ENCODE measurements at regions of chr15 and their contacts with region 1.

Region 1: DNA sequence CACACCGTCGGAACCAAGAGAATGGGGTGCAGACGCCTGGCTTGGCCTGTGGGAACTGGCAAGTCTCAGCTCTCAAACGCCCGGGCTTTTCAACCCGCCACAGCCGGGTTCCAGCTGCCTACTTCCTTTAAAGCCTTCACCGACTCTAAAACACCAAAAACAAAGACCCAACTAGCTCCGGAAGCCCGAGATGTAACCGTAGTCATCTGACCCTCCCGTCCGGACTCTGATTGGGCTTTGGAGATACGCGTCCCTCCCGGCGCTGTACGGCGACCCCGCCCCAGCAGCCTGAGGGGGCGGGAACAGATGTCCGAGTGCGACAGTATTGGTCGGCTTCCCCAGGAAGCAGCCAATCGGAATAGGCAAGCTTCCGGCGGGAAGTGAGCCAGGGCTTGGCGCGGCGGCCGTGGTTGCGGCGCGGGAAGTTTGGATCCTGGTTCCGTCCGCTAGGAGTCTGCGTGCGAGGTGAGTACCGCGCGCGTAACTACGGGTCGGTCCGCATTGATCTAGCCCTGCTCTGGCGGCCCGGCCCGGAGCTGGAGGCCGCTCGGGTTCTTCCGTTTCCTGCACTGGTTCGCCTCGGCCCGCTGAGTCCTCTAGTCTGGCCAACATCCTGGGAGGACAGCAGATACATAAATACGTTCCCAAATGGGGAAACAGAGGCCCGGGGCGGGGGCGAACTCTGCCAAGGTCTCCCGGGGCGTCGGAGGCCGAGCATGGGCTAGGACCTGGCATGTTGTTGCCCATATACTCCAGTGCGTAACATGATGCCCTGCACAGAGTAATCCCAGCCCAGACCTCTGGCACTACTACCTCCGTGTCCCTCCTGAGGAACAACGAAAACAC is at the start of gene BLM:
- DNase-seq: peak; percentile 86
- H3K4me3 ChIP-seq: peak within 1 kb of the TSS; percentile 50 to 72 (median 68)
- H3K27ac ChIP-seq: peak within 1 kb of the TSS; percentile 86 to 97 (median 92)
- H3K4me1 ChIP-seq: peaks cover 4 to 20% (median 7%) of the 10 kb centered on the region in 3 donors
- H3K27me3 ChIP-seq: no peaks in the 10 kb centered on the region
- CTCF ChIP-seq: peak in 5 of 6 experiments; percentile 24 to 66 (median 37)
- POLR2A ChIP-seq: peak in 2 of 4 donors; percentile 70 to 78
- total RNA-seq, gene BLM: 1.3 to 3.4 (median 2.0) TPM

Region 2: GRCh38 chr15:89704411-89704810 is 1012.8 kb before region 1 on chr15:
- intact Hi-C with region 1: no loop called
- DNase-seq: no peak
- H3K4me3 ChIP-seq: no peak overlapping the region
- H3K27ac ChIP-seq: no peak overlapping the region
- H3K4me1 ChIP-seq: no peaks in the 10 kb centered on the region
- H3K27me3 ChIP-seq: peaks cover 0 to 8% (median 0%) of the 10 kb centered on the region in 4 donors
- CTCF ChIP-seq: no peak
- POLR2A ChIP-seq: no peak

Region 3: GRCh38 chr15:90886041-90886614 is 168.9 kb after region 1 on chr15:
- intact Hi-C with region 1: loop called (anchors 10 kb)
- DNase-seq: no peak
- H3K4me3 ChIP-seq: peak overlapping the region in 3 of 4 donors; percentile 56 to 71 (median 60)
- H3K27ac ChIP-seq: peak overlapping the region; percentile 77 to 94 (median 92)
- H3K4me1 ChIP-seq: peaks cover 29 to 43% (median 37%) of the 10 kb centered on the region in 3 donors
- H3K27me3 ChIP-seq: no peaks in the 10 kb centered on the region
- CTCF ChIP-seq: peak in 5 of 6 experiments; percentile 92 to 99 (median 97)
- POLR2A ChIP-seq: no peak

Measured in esophagus squamous epithelium (tissue), 5 donors.